Activated naive CD4-positive, alpha-beta T cell treated with anti-CD3 and anti-CD28 coated beads for 36 hours (primary cell): ENCODE measurements at regions of chr6 and their contacts with region 1.

Region 1: GRCh38 chr6:30533460-30534294 is 22.6 kb downstream of the GNL1 start:
- DNase-seq: no peak
- H3K4me3 Mint-ChIP-seq: peak overlapping the region; percentile 27
- H3K27ac Mint-ChIP-seq: peak overlapping the region; percentile 93
- H3K4me1 Mint-ChIP-seq: peaks cover 49% of the 10 kb centered on the region
- H3K27me3 Mint-ChIP-seq: no peaks in the 10 kb centered on the region

Region 2: GRCh38 chr6:30500421-30501355 is 33.0 kb before region 1 on chr6:
- CTCF ChIA-PET with region 1: interaction called, 112 read pairs
- intact Hi-C with region 1: loop called (anchors 1 kb)
- DNase-seq: peak; percentile 50
- H3K4me3 Mint-ChIP-seq: peak overlapping the region; percentile 67
- H3K27ac Mint-ChIP-seq: peak overlapping the region; percentile 87
- H3K4me1 Mint-ChIP-seq: peaks cover 57% of the 10 kb centered on the region
- H3K27me3 Mint-ChIP-seq: no peaks in the 10 kb centered on the region

Region 3: GRCh38 chr6:30508890-30509736 is 24.6 kb before region 1 on chr6:
- CTCF ChIA-PET with region 1: interaction called, 21 read pairs
- intact Hi-C with region 1: loop called (anchors 2 kb)
- DNase-seq: peak; percentile 42
- H3K4me3 Mint-ChIP-seq: peak overlapping the region; percentile 60
- H3K27ac Mint-ChIP-seq: peak overlapping the region; percentile 98
- H3K4me1 Mint-ChIP-seq: peaks cover 69% of the 10 kb centered on the region
- H3K27me3 Mint-ChIP-seq: no peaks in the 10 kb centered on the region

Region 4: GRCh38 chr6:30711758-30712380 is 178.2 kb after region 1 on chr6:
- CTCF ChIA-PET with region 1: no interaction called
- intact Hi-C with region 1: no loop called
- DNase-seq: no peak
- H3K4me3 Mint-ChIP-seq: no peak overlapping the region
- H3K27ac Mint-ChIP-seq: peak overlapping the region; percentile 33
- H3K4me1 Mint-ChIP-seq: peaks cover 35% of the 10 kb centered on the region
- H3K27me3 Mint-ChIP-seq: no peaks in the 10 kb centered on the region